CD8-positive, alpha-beta memory T cell (primary cell): ENCODE measurements at regions of chr19 and their contacts with region 1.

Region 1: DNA sequence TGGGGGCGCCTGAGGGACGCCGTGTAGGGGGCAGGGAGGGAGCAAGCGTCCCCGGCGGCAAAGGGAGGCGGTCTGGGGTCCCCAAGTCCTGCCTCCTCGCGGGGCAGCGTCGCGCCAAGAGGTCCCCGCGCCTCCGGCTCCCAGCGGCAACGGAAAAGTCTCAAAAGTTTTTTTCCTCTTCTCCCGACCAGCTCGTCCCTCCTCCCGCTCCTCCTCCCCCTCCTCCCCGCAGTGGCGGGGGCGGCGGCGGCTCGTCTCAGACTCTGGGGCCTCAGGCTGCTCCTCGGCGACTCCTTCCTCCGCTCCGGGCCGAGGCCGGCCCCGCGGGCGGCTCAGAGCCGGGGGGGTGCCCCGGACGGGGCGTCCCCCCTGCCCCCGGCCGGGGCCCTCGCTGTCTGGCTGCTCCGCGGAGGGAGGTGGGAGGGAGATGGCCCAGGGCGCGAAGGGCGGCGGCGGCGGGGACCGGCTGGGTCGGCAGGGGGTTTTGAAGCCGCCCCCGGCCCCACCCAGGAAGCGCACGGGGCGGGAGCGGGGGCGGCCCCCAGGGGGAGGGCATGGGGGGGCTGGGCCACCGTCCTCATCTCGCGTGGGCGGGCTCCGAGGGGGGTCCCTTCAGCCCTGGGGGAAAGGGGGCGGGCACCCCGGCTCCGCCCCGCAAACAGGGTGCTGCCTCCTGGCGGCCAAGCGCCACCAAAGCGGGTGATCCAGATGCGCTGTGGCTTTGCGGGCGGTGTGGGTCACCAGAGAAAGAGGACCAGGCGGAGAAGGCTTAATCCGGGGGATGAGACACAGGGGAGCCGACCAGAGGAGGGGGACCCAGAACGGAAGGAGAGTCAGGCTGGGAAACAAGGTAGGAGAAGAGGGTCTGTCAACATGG is at the start of gene TGFB1:
- DNase-seq: peak; percentile 93 to 97 (median 95)
- H3K4me3 ChIP-seq: peak within 1 kb of the TSS; percentile 97
- H3K4me3 Mint-ChIP-seq: peak within 1 kb of the TSS; percentile 93 to 100 (median 100)
- H3K27ac ChIP-seq: peak within 1 kb of the TSS; percentile 95
- H3K27ac Mint-ChIP-seq: peak within 1 kb of the TSS; percentile 93 to 100 (median 99)
- H3K4me1 ChIP-seq: peaks cover 70% of the 10 kb centered on the region
- H3K4me1 Mint-ChIP-seq: peaks cover 55 to 67% (median 65%) of the 10 kb centered on the region in 3 donors
- H3K27me3 ChIP-seq: no peaks in the 10 kb centered on the region
- H3K27me3 Mint-ChIP-seq: peaks cover 0 to 12% of the 10 kb centered on the region in 2 donors
- total RNA-seq, gene TGFB1: 152 to 161 TPM

Region 2: DNA sequence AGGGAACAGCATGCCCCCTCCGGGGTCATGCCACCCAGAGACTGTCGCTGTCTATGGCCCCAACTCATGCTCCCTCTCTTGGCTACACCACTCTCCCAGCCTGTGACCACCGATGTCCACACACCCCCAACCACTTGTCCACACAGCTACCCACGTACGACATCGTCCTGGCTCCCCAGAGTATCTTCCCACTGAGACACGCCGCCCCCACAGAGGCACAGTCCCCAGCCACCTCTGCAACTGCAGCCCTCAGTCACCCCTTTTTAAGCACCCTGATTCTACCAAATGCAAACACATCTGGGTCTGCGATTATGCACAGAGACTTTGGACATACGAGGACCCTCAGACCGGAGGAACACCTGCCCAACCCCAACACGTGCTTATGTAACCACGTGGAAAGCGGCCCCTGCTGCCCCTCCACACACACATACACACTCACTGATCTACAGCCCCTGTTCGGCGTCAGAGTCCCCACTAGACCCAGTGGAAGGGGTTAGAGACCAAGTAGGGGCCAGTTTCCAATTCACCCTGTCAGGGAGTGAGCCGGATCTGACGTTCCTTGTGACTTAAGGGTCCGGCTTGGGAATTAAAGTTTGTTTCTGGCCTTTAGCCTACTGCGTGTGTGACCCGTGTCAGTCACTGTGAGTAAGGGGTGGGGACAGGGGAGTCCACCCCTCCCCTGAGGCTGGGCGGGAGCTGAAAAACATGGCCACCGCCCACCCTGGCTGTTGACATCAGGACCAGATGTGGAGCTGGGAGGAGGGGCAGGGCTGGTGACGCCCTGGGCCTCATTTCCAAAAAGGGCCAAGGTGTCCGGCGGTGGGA is 146.6 kb before region 1 on chr19:
- CTCF ChIA-PET with region 1: interaction called, 17 read pairs
- POLR2A ChIA-PET with region 1: no interaction called
- DNase-seq: no peak
- H3K4me3 ChIP-seq: no peak overlapping the region
- H3K4me3 Mint-ChIP-seq: no peak overlapping the region
- H3K27ac ChIP-seq: no peak overlapping the region
- H3K27ac Mint-ChIP-seq: peak overlapping the region in 5 of 8 donors; percentile 54 to 96 (median 75)
- H3K4me1 ChIP-seq: no peaks in the 10 kb centered on the region
- H3K4me1 Mint-ChIP-seq: peaks cover 3 to 5% (median 4%) of the 10 kb centered on the region in 3 donors
- H3K27me3 ChIP-seq: no peaks in the 10 kb centered on the region
- H3K27me3 Mint-ChIP-seq: peaks cover 2 to 3% of the 10 kb centered on the region in 2 donors

Region 3: GRCh38 chr19:41298348-41298964 is 55.2 kb before region 1 on chr19:
- CTCF ChIA-PET with region 1: interaction called, 54 read pairs
- POLR2A ChIA-PET with region 1: interaction called, 16 read pairs
- DNase-seq: peak; percentile 45 to 78 (median 56)
- H3K4me3 ChIP-seq: no peak overlapping the region
- H3K4me3 Mint-ChIP-seq: peak overlapping the region; percentile 37 to 67 (median 64)
- H3K27ac ChIP-seq: peak overlapping the region; percentile 68
- H3K27ac Mint-ChIP-seq: peak overlapping the region; percentile 96 to 100 (median 98)
- H3K4me1 ChIP-seq: peaks cover 77% of the 10 kb centered on the region
- H3K4me1 Mint-ChIP-seq: peaks cover 80 to 93% (median 90%) of the 10 kb centered on the region in 3 donors
- H3K27me3 ChIP-seq: no peaks in the 10 kb centered on the region
- H3K27me3 Mint-ChIP-seq: no peaks in the 10 kb centered on the region

Region 4: DNA sequence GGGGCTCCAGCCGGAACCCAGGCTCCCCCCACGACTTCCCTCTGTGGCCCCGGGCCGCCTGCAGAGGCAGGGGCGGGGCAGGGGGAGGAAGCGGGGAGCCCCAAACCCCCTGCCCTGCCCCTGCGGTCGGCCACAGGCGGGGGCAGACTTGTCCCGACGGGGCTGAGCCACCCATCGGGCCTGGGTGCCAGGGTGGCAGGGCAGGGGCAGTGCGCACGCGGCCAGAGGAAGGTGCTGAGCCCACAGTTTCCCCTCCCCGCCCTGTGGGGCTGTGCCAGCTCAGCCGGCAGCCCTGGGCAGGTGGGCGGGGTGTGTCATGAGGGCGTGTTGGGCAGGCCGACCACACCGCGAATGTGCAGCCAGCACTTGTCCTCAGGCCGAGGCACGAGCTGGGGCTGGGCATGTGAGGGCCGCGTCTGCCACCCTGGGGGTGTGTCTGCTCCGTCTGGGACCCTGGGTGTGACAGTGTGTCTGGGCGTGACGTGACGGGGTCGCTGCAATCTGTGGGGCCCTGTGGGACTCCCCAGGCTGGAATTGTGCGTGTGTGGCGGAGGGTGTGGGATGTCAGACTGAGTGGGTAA is 26.0 kb before region 1 on chr19:
- CTCF ChIA-PET with region 1: interaction called, 33 read pairs
- POLR2A ChIA-PET with region 1: interaction called, 54 read pairs
- DNase-seq: peak; percentile 81 to 97 (median 92)
- H3K4me3 ChIP-seq: peak overlapping the region; percentile 64
- H3K4me3 Mint-ChIP-seq: peak overlapping the region; percentile 73 to 89 (median 80)
- H3K27ac ChIP-seq: peak overlapping the region; percentile 80
- H3K27ac Mint-ChIP-seq: peak overlapping the region; percentile 97 to 100 (median 100)
- H3K4me1 ChIP-seq: peaks cover 69% of the 10 kb centered on the region
- H3K4me1 Mint-ChIP-seq: peaks cover 68 to 82% (median 70%) of the 10 kb centered on the region in 3 donors
- H3K27me3 ChIP-seq: no peaks in the 10 kb centered on the region
- H3K27me3 Mint-ChIP-seq: peaks cover 0 to 9% of the 10 kb centered on the region in 2 donors

Region 5: GRCh38 chr19:41363753-41364523 is 10.2 kb after region 1 on chr19 and contains the start of gene B9D2:
- CTCF ChIA-PET with region 1: interaction called, 63 read pairs
- POLR2A ChIA-PET with region 1: interaction called, 111 read pairs
- DNase-seq: peak; percentile 96 to 99 (median 99)
- H3K4me3 ChIP-seq: peak within 1 kb of the TSS; percentile 95
- H3K4me3 Mint-ChIP-seq: peak within 1 kb of the TSS; percentile 87 to 98 (median 97)
- H3K27ac ChIP-seq: peak within 1 kb of the TSS; percentile 100
- H3K27ac Mint-ChIP-seq: peak within 1 kb of the TSS; percentile 99 to 100 (median 100)
- H3K4me1 ChIP-seq: peaks cover 22% of the 10 kb centered on the region
- H3K4me1 Mint-ChIP-seq: peaks cover 23 to 40% (median 26%) of the 10 kb centered on the region in 3 donors
- H3K27me3 ChIP-seq: no peaks in the 10 kb centered on the region
- H3K27me3 Mint-ChIP-seq: peaks cover 0 to 2% of the 10 kb centered on the region in 2 donors
- total RNA-seq, gene B9D2: 8.5 to 9.7 TPM

Region 6: GRCh38 chr19:41397086-41398049 is 43.7 kb after region 1 on chr19 and contains the starts of genes BCKDHA and EXOSC5:
- CTCF ChIA-PET with region 1: no interaction called
- POLR2A ChIA-PET with region 1: no interaction called
- DNase-seq: peak; percentile 99 to 100 (median 99)
- H3K4me3 ChIP-seq: peak within 1 kb of the TSS; percentile 99
- H3K4me3 Mint-ChIP-seq: peak within 1 kb of the TSS; percentile 87 to 98 (median 97)
- H3K27ac ChIP-seq: peak within 1 kb of the TSS; percentile 91
- H3K27ac Mint-ChIP-seq: peak within 1 kb of the TSS; percentile 96 to 100 (median 100)
- H3K4me1 ChIP-seq: peaks cover 27% of the 10 kb centered on the region
- H3K4me1 Mint-ChIP-seq: peaks cover 46 to 57% (median 49%) of the 10 kb centered on the region in 3 donors
- H3K27me3 ChIP-seq: no peaks in the 10 kb centered on the region
- H3K27me3 Mint-ChIP-seq: no peaks in the 10 kb centered on the region
- total RNA-seq, gene BCKDHA: 18.5 to 23.5 TPM
- total RNA-seq, gene EXOSC5: 48.5 to 52.3 TPM

Region 7: GRCh38 chr19:41588497-41589209 is 234.9 kb after region 1 on chr19:
- CTCF ChIA-PET with region 1: no interaction called
- POLR2A ChIA-PET with region 1: no interaction called
- DNase-seq: no peak
- H3K4me3 ChIP-seq: no peak overlapping the region
- H3K4me3 Mint-ChIP-seq: no peak overlapping the region
- H3K27ac ChIP-seq: no peak overlapping the region
- H3K27ac Mint-ChIP-seq: peak overlapping the region in 2 of 8 donors; percentile 72 to 80
- H3K4me1 ChIP-seq: no peaks in the 10 kb centered on the region
- H3K4me1 Mint-ChIP-seq: no peaks in the 10 kb centered on the region
- H3K27me3 ChIP-seq: no peaks in the 10 kb centered on the region
- H3K27me3 Mint-ChIP-seq: peaks cover 3 to 12% of the 10 kb centered on the region in 2 donors

Region 8: GRCh38 chr19:41626877-41627276 is 273.2 kb after region 1 on chr19 and contains the start of gene CEACAM4:
- CTCF ChIA-PET with region 1: no interaction called
- POLR2A ChIA-PET with region 1: no interaction called
- DNase-seq: no peak
- H3K4me3 ChIP-seq: no peak within 1 kb of the TSS
- H3K4me3 Mint-ChIP-seq: no peak within 1 kb of the TSS
- H3K27ac ChIP-seq: no peak within 1 kb of the TSS
- H3K27ac Mint-ChIP-seq: no peak within 1 kb of the TSS
- H3K4me1 ChIP-seq: no peaks in the 10 kb centered on the region
- H3K4me1 Mint-ChIP-seq: no peaks in the 10 kb centered on the region
- H3K27me3 ChIP-seq: peaks cover 8% of the 10 kb centered on the region
- H3K27me3 Mint-ChIP-seq: peaks cover 26 to 63% of the 10 kb centered on the region in 2 donors
- total RNA-seq, gene CEACAM4: not detected